Prostate gland (tissue), 2 donors: ENCODE measurements at regions of chr19 and their contacts with region 1.

Region 1: DNA sequence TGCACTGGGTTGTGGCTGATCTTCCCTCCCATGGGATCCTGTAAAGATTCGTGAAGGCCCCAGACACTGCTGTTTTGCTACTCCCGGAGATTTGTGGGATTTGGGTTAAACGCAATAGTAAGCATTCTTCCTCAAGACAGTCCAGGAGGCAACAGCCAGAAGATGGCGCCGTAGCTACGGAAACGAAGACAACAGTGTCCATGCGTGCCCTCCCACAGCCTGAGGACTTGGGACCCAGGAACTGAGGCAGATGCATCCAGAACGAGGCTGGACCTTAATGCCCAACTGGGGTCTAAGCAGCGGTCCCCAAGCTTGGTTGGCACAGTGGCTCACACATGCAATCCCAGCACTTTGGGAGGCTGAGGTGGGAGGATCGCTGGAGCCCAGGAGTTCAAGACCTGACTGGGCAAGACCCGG is 57.6 kb upstream of the ZNF507 start:
- DNase-seq: peak; percentile 43
- H3K4me3 ChIP-seq: no peak overlapping the region
- H3K27ac ChIP-seq: no peak overlapping the region
- H3K4me1 ChIP-seq: no peaks in the 10 kb centered on the region
- H3K27me3 ChIP-seq: no peaks in the 10 kb centered on the region
- CTCF ChIP-seq: peak in 3 of 4 experiments; percentile 31 to 45 (median 37)
- POLR2A ChIP-seq: no peak

Region 2: DNA sequence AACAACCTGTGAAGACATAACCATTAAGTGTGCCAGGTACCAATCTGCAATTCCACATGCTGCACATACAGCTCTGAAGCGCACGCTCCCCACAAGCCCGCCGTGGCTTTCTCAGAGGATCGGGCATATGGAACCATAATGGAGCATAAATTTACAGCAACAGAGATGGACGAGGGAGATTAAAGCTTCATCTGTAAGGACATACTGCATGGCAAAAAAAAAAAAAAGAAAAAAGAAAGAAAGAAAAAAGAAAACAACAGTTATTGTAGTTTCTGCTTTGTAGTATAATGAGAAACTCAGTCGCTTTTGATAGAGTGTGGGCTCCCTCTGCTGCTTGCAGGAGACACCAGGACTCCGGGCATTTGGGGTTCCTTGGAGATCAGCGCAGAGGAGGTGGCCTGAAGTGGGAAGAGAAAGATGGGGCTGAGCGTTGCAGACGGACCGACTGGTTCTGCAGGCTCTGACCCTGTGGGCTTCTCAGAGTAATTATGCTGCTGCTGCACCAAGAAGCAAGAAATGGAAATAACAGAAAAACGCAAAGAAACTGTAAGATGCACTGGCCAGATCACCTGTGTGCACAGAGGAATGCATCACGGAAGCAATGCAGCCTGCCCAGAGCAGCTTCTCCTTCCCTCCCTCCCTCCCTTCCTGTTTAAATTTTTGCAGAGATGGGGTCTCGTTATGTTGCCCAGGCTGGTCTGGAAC is 282.4 kb after region 1 on chr19:
- intact Hi-C with region 1: loop called (anchors 5 kb)
- DNase-seq: peak; percentile 51
- H3K4me3 ChIP-seq: no peak overlapping the region
- H3K27ac ChIP-seq: no peak overlapping the region
- H3K4me1 ChIP-seq: no peaks in the 10 kb centered on the region
- H3K27me3 ChIP-seq: no peaks in the 10 kb centered on the region
- CTCF ChIP-seq: peak in 3 of 4 experiments; percentile 52 to 61 (median 58)
- POLR2A ChIP-seq: no peak